HEK293 (cell line): ENCODE measurements at regions of chr1 and their contacts with region 1.

Region 1: GRCh38 chr1:223628233-223629125 is 37.0 kb downstream of the CAPN8 start:
- H3K4me3 ChIP-seq: no peak overlapping the region
- H3K27ac ChIP-seq: no peak overlapping the region
- H3K4me1 ChIP-seq: no peaks in the 10 kb centered on the region
- CTCF ChIP-seq: peak; percentile 54

Region 2: GRCh38 chr1:223549740-223550139 is 78.7 kb before region 1 on chr1:
- CTCF ChIA-PET with region 1: interaction called, 17 read pairs
- POLR2A ChIA-PET with region 1: no interaction called
- H3K4me3 ChIP-seq: no peak overlapping the region
- H3K27ac ChIP-seq: no peak overlapping the region
- H3K4me1 ChIP-seq: peaks cover 9% of the 10 kb centered on the region
- CTCF ChIP-seq: 0 out of 2 replicates have a peak, but pooled peaks have one; percentile 10

Region 3: GRCh38 chr1:223611936-223612335 is 16.5 kb before region 1 on chr1:
- CTCF ChIA-PET with region 1: interaction called, 63 read pairs
- POLR2A ChIA-PET with region 1: no interaction called
- H3K4me3 ChIP-seq: no peak overlapping the region
- H3K27ac ChIP-seq: no peak overlapping the region
- H3K4me1 ChIP-seq: no peaks in the 10 kb centered on the region
- CTCF ChIP-seq: no peak

Region 4: DNA sequence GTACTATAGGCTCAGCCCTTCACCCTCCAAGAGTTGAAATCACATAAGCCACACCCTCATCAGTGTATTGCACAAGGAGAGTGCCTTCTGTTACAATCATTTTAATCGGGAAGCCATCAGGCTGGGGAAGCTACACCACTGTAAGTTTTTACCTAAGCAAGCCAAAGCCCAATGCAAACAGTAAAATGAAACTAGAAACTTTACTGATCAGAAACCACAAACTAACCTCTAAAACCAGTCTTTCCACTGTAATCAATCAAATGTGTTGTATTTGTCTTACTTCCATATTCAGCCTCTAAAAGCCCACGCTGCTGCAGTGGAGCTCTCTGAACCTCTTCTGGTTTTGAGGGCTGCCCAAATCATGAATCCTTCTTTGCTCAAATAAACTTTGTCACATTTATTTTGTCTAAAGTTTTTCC is 10.9 kb after region 1 on chr1:
- CTCF ChIA-PET with region 1: interaction called, 12 read pairs
- POLR2A ChIA-PET with region 1: no interaction called
- H3K4me3 ChIP-seq: no peak overlapping the region
- H3K27ac ChIP-seq: no peak overlapping the region
- H3K4me1 ChIP-seq: peaks cover 7% of the 10 kb centered on the region; the same call in 1 of the 2 replicates
- CTCF ChIP-seq: no peak

Region 5: DNA sequence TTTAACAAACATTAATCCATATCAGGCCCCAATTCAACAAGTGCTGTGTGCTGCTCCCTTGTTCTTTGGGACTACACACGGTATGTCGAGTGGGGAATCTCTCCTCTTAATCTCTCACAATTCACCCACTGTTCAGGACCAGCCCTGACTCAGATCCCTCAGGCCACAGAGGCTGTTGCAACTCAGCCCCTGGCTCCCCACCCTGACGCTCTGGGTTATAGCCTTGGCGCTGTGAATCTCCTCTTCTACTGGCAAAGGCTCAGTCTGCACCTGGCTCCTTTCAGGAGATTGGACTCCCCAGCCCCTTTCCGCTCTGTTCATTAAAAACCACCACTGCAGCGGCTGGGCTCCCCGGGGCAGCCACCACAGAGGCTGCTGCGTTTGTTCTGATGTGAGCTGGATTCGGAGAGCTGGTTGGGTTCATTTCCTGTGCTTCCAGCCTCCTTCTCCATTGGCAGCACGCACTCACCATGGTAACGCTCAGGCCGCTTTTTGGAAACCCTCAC is 24.0 kb after region 1 on chr1:
- CTCF ChIA-PET with region 1: interaction called, 17 read pairs
- POLR2A ChIA-PET with region 1: no interaction called
- H3K4me3 ChIP-seq: no peak overlapping the region
- H3K27ac ChIP-seq: no peak overlapping the region
- H3K4me1 ChIP-seq: peaks cover 2% of the 10 kb centered on the region; the same call in 1 of the 2 replicates
- CTCF ChIP-seq: no peak